AG04449 (cell line): ENCODE measurements at regions of chr3 and their contacts with region 1.

Region 1: DNA sequence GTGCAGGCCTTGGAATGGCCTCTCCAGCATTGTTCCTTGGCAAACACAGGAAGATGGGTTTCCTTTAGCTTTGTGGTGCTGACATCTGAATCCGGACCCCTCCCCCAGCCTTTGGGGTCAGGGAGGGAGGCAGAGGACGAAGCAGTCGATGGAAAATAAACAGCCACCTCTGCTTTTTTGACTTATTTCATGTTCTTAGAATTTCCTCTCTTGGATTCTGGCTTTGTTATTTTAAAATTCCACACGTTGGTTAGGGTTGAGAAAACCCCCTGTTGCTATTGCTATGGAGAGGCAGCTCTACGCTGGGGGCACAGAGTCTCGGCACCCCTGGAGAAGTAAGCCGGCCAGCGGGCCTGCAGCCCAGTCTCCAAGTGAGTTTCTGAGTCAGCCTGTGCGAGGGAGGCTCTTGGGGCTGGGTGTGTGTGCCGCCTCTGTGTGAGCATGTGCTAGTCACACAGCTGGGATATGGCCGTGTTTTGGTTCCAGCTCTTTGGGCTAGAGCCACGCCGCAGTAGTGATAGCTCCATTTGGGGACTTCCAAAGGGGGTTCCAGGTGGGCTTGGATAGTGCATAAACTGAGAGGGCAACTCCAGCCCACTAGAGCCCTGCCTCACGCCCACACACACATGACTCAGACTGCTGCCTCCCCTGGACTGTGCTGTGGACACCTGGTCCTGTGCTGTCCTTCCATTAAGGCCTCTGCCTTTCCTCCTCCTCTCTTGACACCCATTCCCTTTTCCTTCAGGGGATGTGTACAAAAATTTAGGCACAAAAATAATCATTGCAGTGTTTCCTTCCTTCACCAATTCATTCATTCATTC is 58.8 kb downstream of the AMOTL2 start:
- DNase-seq: no peak
- H3K4me3 ChIP-seq: no peak overlapping the region
- CTCF ChIP-seq: no peak

Region 2: GRCh38 chr3:134282664-134283047 is 32.8 kb before region 1 on chr3:
- CTCF ChIA-PET with region 1: no interaction called
- POLR2A ChIA-PET with region 1: no interaction called
- DNase-seq: no peak
- H3K4me3 ChIP-seq: no peak overlapping the region
- CTCF ChIP-seq: no peak

Region 3: DNA sequence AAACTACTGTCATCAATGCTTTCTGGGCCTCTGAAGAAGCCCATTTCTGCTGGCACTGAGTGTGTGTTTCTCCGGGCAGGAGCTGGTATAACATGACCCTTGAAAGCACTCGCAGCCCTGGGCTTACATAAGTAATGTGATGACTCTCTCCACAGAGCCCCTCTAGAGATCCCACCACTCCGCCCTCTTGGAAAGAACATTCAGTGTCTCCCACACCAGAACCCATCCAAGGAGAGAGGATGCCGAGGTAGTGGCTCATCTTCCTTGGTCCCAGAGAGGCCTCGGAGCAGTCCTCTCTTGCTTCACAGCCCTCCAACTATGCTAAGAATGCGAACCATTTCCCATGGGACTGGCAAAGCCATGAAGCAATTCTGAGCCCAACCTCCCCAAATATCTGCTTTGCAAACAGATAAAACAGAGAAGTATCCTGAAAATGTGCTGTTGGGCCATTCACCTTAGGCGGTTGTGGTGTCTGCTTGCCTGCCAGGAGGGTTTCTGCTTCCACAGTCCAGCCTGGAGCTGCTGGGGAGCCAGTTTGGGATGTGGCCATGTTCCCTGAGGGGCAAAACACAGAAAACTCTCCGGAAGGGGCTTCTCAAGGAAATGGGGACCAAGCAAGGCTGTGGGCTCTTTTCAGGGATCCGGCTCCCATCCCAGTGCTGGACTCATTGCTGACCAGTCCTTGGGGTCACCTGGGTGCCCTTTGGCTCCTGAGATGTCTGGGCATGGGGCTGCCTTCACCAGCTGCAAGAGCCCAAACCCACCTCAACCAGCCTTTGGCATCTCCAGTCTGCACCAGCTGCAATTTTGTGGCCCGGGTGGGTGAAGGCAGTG is 11.5 kb after region 1 on chr3:
- CTCF ChIA-PET with region 1: interaction called, 11 read pairs
- POLR2A ChIA-PET with region 1: interaction called, 18 read pairs
- DNase-seq: peak; percentile 99
- H3K4me3 ChIP-seq: peak overlapping the region; percentile 2; the same call in 1 of the 2 replicates
- CTCF ChIP-seq: no peak